Activated T-helper 2 cell treated with anti-CD3 and anti-CD28 coated beads, Interferon-gamma antibody, Interleukin-2, Interleukin-4, amounts not matched to agents 10 μg/mL and 5 μg/mL and 100 μg/mL, durations not matched to agents 14 hours and 24 hours and 36 hours (primary cell): ENCODE measurements at regions of chr2 and their contacts with region 1.

Region 1: DNA sequence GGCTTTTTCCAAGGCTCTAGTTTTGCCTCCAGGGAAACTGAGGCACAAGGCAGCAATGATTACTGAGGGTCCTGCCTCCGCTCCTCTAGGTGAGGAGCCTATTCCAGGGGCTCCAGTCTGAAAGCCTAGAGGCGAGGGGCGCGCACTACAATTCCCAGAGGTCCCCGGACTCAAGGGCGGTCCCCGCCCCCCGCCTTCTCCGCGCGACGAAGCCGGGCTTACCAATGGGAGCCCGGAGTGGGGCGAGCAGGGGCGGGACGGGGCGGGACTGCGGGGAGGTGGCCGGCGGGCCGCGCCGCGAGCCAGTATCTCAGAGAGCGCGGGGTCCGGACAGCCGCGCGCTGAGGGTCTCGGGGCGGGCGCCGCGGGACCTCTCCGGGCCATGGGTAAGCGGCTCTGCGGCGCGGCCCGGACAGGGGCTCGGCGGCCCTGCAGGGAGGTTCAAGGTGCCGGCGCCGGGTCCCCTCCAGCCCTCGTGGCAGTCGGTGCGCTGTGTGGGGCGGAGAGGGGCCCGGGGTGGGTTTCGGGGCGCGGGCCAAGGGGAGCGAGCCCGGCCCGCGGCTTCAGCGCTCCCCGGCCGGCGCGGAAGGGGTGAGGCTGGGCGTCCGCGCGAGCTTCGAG is at the start of gene ARID5A:
- DNase-seq: peak; percentile 86
- H3K4me3 Mint-ChIP-seq: peak within 1 kb of the TSS; percentile 94
- H3K27ac Mint-ChIP-seq: peak within 1 kb of the TSS; percentile 91
- H3K4me1 Mint-ChIP-seq: peaks cover 66% of the 10 kb centered on the region
- H3K27me3 Mint-ChIP-seq: no peaks in the 10 kb centered on the region
- total RNA-seq, gene ARID5A: 164 and 170 TPM in 2 replicates

Region 2: GRCh38 chr2:96265840-96266679 is 270.5 kb before region 1 on chr2 and contains the starts of genes CIAO1 and TMEM127:
- intact Hi-C with region 1: loop called (anchors 5 kb)
- DNase-seq: peak; percentile 99
- H3K4me3 Mint-ChIP-seq: peak within 1 kb of the TSS; percentile 100
- H3K27ac Mint-ChIP-seq: peak within 1 kb of the TSS; percentile 98
- H3K4me1 Mint-ChIP-seq: peaks cover 32% of the 10 kb centered on the region
- H3K27me3 Mint-ChIP-seq: no peaks in the 10 kb centered on the region
- total RNA-seq, gene CIAO1: 93.9 and 94.7 TPM in 2 replicates
- total RNA-seq, gene TMEM127: 29.0 and 30.4 TPM in 2 replicates

Region 3: GRCh38 chr2:96344011-96344410 is 192.5 kb before region 1 on chr2:
- intact Hi-C with region 1: loop called (anchors 2 kb)
- DNase-seq: peak; percentile 60
- H3K4me3 Mint-ChIP-seq: peak overlapping the region; percentile 45
- H3K27ac Mint-ChIP-seq: peak overlapping the region; percentile 66
- H3K4me1 Mint-ChIP-seq: peaks cover 72% of the 10 kb centered on the region
- H3K27me3 Mint-ChIP-seq: no peaks in the 10 kb centered on the region

Region 4: GRCh38 chr2:96554293-96555145 is 18.0 kb after region 1 on chr2:
- intact Hi-C with region 1: loop called (anchors 2 kb)
- DNase-seq: peak; percentile 58
- H3K4me3 Mint-ChIP-seq: no peak overlapping the region
- H3K27ac Mint-ChIP-seq: no peak overlapping the region
- H3K4me1 Mint-ChIP-seq: peaks cover 19% of the 10 kb centered on the region
- H3K27me3 Mint-ChIP-seq: no peaks in the 10 kb centered on the region

Region 5: GRCh38 chr2:96638144-96639121 is 101.9 kb after region 1 on chr2 and contains the start of gene KANSL3:
- intact Hi-C with region 1: loop called (anchors 5 kb)
- DNase-seq: peak; percentile 90
- H3K4me3 Mint-ChIP-seq: peak within 1 kb of the TSS; percentile 94
- H3K27ac Mint-ChIP-seq: peak within 1 kb of the TSS; percentile 97
- H3K4me1 Mint-ChIP-seq: peaks cover 28% of the 10 kb centered on the region
- H3K27me3 Mint-ChIP-seq: peaks cover 3% of the 10 kb centered on the region
- total RNA-seq, gene KANSL3: 45.8 and 48.3 TPM in 2 replicates

Region 6: GRCh38 chr2:96856776-96857673 is 320.5 kb after region 1 on chr2:
- intact Hi-C with region 1: loop called (anchors 5 kb)
- DNase-seq: no peak
- H3K4me3 Mint-ChIP-seq: peak overlapping the region; percentile 90
- H3K27ac Mint-ChIP-seq: peak overlapping the region; percentile 82
- H3K4me1 Mint-ChIP-seq: peaks cover 24% of the 10 kb centered on the region
- H3K27me3 Mint-ChIP-seq: no peaks in the 10 kb centered on the region